ENCODE measurements at regions of chr12 and their contacts with region 1.

Region 1: GRCh38 chr12:106223485-106224354 is 24.1 kb downstream of the CKAP4 start:
- DNase-seq: peak; percentile 78
- H3K4me3 ChIP-seq: no peak overlapping the region
- H3K27ac ChIP-seq: no peak overlapping the region
- H3K4me1 ChIP-seq: no peaks in the 10 kb centered on the region
- H3K27me3 ChIP-seq: no peaks in the 10 kb centered on the region
- CTCF ChIP-seq: peak; percentile 97

Region 2: DNA sequence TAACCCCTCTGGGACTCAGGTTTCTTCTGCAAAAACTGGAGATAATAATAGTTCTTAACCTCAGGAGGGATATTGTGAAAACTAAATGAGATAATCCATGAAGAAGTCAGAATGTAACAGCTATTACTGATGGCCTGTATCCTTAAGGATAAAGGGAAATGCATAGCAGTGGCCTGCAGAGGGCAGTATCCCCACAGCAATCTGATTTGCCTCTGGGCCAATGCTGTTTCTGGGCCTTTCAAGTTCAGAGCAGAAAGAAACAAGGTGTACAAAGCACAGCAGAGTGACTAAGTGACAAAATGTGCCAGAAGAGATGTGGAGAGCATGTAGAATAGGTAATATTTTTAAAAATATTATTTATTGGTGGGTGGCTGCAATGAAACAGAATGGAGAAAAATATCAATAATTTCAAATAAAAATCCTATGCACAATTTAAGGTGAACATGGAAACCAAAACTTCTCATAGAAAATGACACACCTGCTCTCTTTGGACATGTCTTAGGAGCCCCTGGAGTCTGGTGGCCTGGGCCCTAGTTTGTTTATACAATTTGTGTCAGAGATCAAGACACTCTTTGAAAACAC is 803.0 kb before region 1 on chr12:
- intact Hi-C with region 1: loop called (anchors 2 kb)
- DNase-seq: peak; percentile 72
- H3K4me3 ChIP-seq: no peak overlapping the region
- H3K27ac ChIP-seq: no peak overlapping the region
- H3K4me1 ChIP-seq: no peaks in the 10 kb centered on the region
- H3K27me3 ChIP-seq: no peaks in the 10 kb centered on the region
- CTCF ChIP-seq: peak; percentile 86

Region 3: GRCh38 chr12:105798256-105798845 is 425.4 kb before region 1 on chr12:
- intact Hi-C with region 1: no loop called
- DNase-seq: no peak
- H3K4me3 ChIP-seq: no peak overlapping the region
- H3K27ac ChIP-seq: no peak overlapping the region
- H3K4me1 ChIP-seq: no peaks in the 10 kb centered on the region
- H3K27me3 ChIP-seq: no peaks in the 10 kb centered on the region
- CTCF ChIP-seq: no peak

Region 4: DNA sequence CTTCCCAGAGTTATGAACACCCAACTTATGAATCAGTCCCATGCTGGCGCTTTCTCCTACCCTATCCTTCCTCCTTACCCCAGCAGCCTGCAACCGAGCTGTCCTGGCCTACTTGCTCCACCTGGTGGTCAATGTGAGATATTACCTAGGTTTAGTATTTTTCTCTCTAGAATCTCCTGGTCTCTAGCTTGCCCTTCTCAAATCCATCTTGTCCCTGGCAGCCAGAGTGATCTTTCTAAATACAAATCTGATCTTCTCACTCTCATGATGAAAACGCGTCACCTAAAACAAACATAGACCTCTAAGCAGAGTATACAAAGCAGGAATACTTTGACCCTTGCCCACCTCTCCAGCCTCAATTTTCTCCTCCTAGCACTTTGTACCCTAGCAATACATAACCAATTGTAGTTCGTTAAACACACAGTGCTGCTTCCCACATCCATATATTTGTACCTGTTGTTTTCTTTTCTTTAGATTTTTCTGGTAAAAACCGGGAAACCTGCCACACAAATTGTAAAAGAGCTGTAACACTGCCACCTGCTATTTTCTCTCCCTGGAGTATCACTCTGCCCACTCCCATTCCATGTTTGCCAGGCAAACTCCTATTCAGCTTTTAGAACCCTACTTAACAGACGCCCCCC is 58.9 kb after region 1 on chr12:
- intact Hi-C with region 1: loop called (anchors 2 kb)
- DNase-seq: peak; percentile 77
- H3K4me3 ChIP-seq: no peak overlapping the region
- H3K27ac ChIP-seq: no peak overlapping the region
- H3K4me1 ChIP-seq: peaks cover 2% of the 10 kb centered on the region
- H3K27me3 ChIP-seq: no peaks in the 10 kb centered on the region
- CTCF ChIP-seq: peak; percentile 44

Region 5: DNA sequence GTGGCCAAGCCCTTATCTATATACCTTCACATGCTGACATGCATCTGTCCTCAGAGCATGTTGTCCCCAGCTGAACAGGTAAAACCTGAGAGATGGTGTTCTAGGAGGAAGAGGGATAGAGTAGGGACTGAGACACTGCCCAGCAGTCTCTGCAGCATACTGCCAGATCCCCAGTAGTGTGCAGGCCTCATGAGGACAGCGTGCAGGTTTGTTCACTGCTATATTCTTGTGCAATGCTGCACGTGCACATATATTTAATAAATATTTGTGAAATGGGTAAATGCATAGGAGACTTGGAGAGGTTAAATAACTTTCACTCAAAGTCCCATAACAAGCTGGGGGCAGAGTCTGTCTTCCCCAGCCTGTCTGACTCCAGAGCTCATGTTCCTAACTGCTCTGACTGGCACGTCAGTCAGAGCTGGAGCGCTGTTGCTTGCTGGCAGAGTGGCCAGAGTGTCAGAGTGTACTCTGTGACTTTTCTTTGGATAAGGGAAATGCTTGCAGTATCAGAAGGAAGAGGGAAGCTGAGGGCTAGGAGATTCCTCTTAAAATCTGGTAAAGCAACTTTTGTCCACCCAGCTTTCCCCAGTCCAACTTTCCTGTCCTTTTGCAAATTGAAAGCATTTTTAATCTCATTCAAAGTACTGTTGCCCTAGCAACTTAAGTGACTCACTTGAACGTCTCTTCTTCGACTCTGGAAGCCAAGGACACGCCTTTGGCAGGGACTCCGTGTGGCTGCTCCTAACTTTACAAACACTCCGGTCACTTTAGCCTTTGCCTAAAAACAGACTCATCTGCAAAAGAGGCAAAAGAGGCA is 118.9 kb after region 1 on chr12:
- intact Hi-C with region 1: loop called (anchors 5 kb)
- DNase-seq: peak; percentile 67
- H3K4me3 ChIP-seq: no peak overlapping the region
- H3K27ac ChIP-seq: peak overlapping the region; percentile 34
- H3K4me1 ChIP-seq: peaks cover 9% of the 10 kb centered on the region
- H3K27me3 ChIP-seq: no peaks in the 10 kb centered on the region
- CTCF ChIP-seq: no peak

Region 6: GRCh38 chr12:106357549-106358395 is 134.1 kb after region 1 on chr12 and contains the start of gene POLR3B:
- intact Hi-C with region 1: loop called (anchors 5 kb)
- DNase-seq: peak; percentile 96
- H3K4me3 ChIP-seq: peak within 1 kb of the TSS; percentile 83
- H3K27ac ChIP-seq: peak within 1 kb of the TSS; percentile 98
- H3K4me1 ChIP-seq: no peaks in the 10 kb centered on the region
- H3K27me3 ChIP-seq: no peaks in the 10 kb centered on the region
- CTCF ChIP-seq: peak; percentile 90
- total RNA-seq, gene POLR3B: 5.7 to 10.4 TPM

Measured in colonic mucosa (tissue), 4 donors.